ENCODE measurements at regions of chr6 and their contacts with region 1.

Region 1: DNA sequence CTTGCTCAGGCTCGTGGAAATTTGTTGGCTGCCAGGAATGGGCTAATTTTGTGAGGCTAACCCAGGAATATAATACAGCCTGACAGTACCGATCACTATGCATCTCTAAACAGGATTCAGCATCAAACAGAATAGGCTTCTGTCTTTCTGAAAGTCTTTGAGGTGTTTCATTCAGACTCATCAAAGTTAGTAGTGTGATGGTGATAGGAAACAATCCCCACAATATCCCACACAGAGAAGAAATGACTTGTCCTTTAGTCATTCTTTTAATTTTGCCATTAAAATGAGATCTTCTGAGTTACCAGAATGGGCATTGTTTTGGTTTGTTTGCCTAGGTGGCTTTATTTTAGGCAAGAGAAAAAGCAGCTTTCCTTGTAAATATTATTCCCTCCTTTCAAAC is 54.3 kb downstream of the FAM229B start:
- DNase-seq: no peak
- H3K4me3 ChIP-seq: no peak overlapping the region
- H3K27ac ChIP-seq: no peak overlapping the region
- H3K4me1 ChIP-seq: no peaks in the 10 kb centered on the region
- H3K27me3 ChIP-seq: no peaks in the 10 kb centered on the region
- CTCF ChIP-seq: no peak
- POLR2A ChIP-seq: no peak

Region 2: DNA sequence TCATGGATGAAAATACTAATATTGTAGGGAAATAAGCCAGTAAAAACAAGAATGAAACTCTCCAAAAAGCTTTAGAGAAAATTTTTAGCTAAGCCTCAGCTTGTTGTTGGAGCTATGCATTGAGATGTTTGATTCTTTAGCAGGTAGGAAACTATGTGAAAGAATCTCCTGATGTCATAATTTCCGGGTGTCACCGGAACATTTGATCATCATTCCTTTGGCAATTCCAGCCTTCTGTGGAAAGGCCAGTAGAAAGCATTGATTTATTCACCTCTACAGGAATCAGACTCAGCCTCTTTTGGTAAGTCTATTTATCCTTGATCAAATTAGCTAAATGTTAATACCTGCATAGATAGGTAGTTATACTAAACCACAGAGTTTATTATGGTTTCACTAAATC is 44.8 kb before region 1 on chr6:
- intact Hi-C with region 1: loop called (anchors 1 kb)
- DNase-seq: no peak
- H3K4me3 ChIP-seq: no peak overlapping the region
- H3K27ac ChIP-seq: no peak overlapping the region
- H3K4me1 ChIP-seq: no peaks in the 10 kb centered on the region
- H3K27me3 ChIP-seq: no peaks in the 10 kb centered on the region
- CTCF ChIP-seq: no peak
- POLR2A ChIP-seq: no peak

Measured in vagina (tissue), 2 donors.